ENCODE measurements at regions of chr14 and their contacts with region 1.

Region 1: DNA sequence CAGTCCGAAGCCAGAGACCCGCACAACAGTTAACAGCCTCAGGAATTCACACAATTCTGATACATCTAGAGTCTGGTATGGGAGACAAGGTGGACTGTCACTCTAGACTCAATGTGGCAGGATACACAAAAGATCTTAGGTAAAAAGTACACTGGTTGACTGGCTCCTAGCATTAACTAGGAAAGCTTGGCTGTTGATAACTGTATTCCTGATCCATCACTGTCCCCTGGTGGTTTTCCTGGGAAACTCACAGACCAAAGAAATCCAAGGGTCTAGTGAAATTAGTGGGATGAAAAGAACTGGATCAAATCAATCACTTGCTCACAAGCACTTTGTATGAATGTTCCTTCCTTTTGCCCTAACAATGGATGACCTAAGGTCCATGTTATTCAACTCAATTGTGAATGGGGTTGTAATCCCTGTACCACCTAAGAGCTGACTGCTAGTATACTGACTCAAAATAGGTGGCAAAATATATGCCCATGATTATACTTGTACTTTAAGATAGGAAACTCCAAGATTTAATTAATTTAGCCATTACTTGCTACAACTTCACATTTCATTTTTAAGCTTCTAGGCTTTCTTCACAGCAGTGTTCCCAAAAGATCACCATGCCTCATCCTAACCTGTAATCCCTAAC is 14.0 kb downstream of the NPC2 start:
- DNase-seq: no peak
- H3K4me3 ChIP-seq: no peak overlapping the region
- H3K27ac ChIP-seq: peak overlapping the region in 1 of 2 donors; percentile 15
- H3K4me1 ChIP-seq: peaks cover 13% of the 10 kb centered on the region
- H3K27me3 ChIP-seq: no peaks in the 10 kb centered on the region
- CTCF ChIP-seq: peak; percentile 77 to 87 (median 82)
- POLR2A ChIP-seq: no peak

Region 2: DNA sequence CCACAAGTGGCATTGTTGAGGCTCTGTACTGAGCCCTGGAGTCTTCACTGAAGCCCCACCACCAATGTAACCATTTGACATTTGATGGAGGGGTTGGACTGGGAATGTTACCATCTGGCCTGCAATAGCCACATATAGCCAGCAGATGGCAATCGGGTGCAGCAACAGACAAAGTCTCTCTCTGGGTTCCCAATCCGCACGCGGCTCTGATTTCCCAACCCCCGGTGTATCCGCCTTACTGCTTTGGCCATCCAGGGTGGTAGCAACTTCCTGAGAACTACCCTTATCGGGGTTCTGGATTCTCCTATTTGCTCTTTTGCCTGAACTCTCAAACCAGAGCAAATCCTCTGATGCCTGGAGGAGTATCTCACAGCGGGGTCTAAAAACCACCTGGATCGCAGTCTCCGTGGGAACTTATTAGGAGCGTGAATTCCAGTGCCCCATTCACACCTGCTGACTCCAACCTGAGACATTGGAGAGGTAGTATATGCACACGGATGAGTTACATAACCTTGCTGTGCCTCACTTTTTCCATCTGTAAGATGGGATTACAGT is 116.7 kb before region 1 on chr14:
- intact Hi-C with region 1: loop called (anchors 10 kb)
- DNase-seq: peak; percentile 90
- H3K4me3 ChIP-seq: no peak overlapping the region
- H3K27ac ChIP-seq: no peak overlapping the region
- H3K4me1 ChIP-seq: no peaks in the 10 kb centered on the region
- H3K27me3 ChIP-seq: no peaks in the 10 kb centered on the region
- CTCF ChIP-seq: peak; percentile 87 to 96 (median 95)
- POLR2A ChIP-seq: no peak

Region 3: DNA sequence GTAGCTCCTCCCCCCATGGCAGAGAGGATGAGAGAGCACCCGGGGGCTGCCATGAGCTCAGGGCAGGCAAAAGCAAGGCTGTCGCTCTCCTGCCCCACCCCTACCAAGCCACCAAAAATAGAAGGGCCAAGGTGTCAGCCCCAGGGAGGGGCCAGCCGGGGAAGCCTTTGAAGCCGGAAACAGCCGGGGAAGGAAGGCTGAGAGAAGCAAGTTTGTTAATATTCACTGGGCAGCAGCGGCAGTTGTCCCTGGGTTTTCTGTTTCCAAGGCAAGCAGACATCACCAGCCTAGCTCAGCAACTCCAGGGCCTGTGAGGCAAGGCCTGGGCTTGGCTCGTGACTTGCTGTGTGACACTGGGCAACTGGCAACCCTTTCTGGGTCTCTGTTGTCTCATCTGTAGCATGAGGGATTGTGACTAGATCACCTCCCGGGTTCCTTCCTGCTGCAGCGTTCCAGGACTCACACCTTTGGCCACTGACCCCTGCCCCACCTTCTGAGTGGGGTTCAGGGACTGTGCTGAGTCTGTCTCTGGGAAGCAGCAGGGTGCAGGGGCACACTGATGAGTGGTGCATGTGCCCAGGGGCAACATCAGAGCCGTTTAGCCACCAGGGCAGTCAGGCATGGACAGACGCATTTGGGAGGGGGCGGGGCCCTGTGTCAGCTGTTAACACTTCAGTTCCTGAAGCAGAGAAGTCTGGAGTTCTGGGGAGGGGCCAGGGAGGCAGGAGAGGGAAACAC is 77.4 kb before region 1 on chr14:
- intact Hi-C with region 1: no loop called
- DNase-seq: peak; percentile 26
- H3K4me3 ChIP-seq: no peak overlapping the region
- H3K27ac ChIP-seq: no peak overlapping the region
- H3K4me1 ChIP-seq: peaks cover 11% of the 10 kb centered on the region
- H3K27me3 ChIP-seq: no peaks in the 10 kb centered on the region
- CTCF ChIP-seq: no peak
- POLR2A ChIP-seq: no peak

Measured in testis (tissue), 5 donors.